CD4-positive, alpha-beta memory T cell (primary cell): ENCODE measurements at regions of chr5 and their contacts with region 1.

Region 1: DNA sequence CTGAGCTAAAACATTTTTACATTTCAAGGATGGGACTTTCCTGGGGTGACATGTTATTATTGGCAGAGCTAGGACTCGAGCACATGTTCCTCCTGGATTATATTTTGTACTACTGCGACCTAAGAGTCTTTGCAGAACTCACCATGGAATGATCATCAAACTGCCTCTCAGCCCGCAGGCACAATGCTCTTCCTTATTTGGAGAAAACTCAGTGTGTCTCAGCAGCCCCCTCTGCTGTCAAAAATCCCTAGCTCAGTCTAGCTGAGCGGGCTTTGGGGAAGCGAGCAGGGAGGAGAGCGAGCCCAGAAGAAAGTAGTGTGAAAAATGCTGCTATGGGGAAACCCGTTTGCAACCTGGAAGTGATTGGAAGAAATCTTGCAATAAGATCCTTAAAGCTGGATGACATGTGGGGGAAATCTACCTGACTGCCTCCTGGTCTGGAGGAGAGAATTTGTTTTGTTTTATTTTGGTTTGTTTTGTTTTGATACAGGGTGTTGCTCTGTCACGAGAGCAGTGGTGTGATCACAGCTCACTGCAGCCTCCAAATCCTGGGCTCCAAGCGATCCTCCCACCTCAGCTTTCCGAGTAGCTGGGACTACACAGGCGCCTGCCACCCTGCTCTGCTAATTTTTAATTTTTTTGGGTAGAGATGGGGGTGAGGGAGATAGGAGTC is 89.9 kb upstream of the CLINT1 start:
- DNase-seq: peak; percentile 63 to 75 (median 68)
- H3K4me3 ChIP-seq: no peak overlapping the region
- H3K4me3 Mint-ChIP-seq: peak overlapping the region in 3 of 8 donors; percentile 1 to 11 (median 5)
- H3K27ac ChIP-seq: no peak overlapping the region
- H3K27ac Mint-ChIP-seq: no peak overlapping the region
- H3K4me1 ChIP-seq: no peaks in the 10 kb centered on the region
- H3K4me1 Mint-ChIP-seq: peaks cover 4 to 6% (median 5%) of the 10 kb centered on the region in 4 donors
- H3K27me3 ChIP-seq: no peaks in the 10 kb centered on the region
- H3K27me3 Mint-ChIP-seq: peaks cover 10 to 12% of the 10 kb centered on the region in 2 donors

Region 2: DNA sequence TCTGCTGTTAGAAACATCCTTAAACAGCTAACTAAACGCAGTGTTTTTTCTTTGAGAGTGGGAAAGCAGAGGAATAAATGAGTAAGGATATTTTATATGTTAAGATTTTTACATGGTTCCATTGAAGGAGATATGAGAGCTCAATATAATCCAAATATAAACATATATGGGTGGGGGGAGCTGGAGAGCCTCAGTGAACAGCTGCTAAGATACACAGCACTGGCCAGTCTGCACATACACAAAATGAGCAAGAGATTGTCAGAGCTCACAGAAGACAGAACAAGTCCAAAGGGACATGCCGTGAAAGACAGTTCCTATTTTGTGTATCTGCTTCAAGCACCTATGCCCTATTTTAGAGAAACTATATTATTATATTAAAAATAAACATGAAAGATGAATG is 136.8 kb before region 1 on chr5:
- CTCF ChIA-PET with region 1: interaction called, 95 read pairs
- POLR2A ChIA-PET with region 1: interaction called, 7 read pairs
- intact Hi-C with region 1: loop called (anchors 1 kb)
- DNase-seq: no peak
- H3K4me3 ChIP-seq: no peak overlapping the region
- H3K4me3 Mint-ChIP-seq: no peak overlapping the region
- H3K27ac ChIP-seq: no peak overlapping the region
- H3K27ac Mint-ChIP-seq: no peak overlapping the region
- H3K4me1 ChIP-seq: no peaks in the 10 kb centered on the region
- H3K4me1 Mint-ChIP-seq: peaks cover 0 to 2% (median 0%) of the 10 kb centered on the region in 4 donors
- H3K27me3 ChIP-seq: no peaks in the 10 kb centered on the region
- H3K27me3 Mint-ChIP-seq: no peaks in the 10 kb centered on the region

Region 3: DNA sequence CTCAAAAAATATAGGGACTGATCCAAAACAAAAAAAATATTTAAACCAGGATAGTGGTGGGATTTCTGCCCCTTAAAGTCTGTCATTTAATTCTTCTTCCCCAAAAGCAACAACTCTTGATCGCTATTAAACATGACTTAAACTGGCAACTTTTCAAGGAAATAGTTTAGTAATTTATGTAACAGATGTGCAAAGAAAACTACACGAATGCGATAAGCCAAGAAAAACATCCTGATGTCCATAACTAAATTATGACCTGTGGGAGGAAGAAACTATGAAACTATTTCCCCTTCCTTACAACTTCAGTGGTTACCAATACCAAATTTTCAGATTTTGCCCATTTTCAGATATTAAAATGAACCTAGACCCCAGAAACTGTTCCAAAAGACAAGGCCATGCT is 121.5 kb before region 1 on chr5:
- CTCF ChIA-PET with region 1: interaction called, 18 read pairs
- POLR2A ChIA-PET with region 1: no interaction called
- intact Hi-C with region 1: no loop called
- DNase-seq: no peak
- H3K4me3 ChIP-seq: no peak overlapping the region
- H3K4me3 Mint-ChIP-seq: no peak overlapping the region
- H3K27ac ChIP-seq: no peak overlapping the region
- H3K27ac Mint-ChIP-seq: peak overlapping the region in 1 of 7 donors; percentile 19
- H3K4me1 ChIP-seq: peaks cover 22% of the 10 kb centered on the region
- H3K4me1 Mint-ChIP-seq: peaks cover 29 to 59% (median 39%) of the 10 kb centered on the region in 4 donors
- H3K27me3 ChIP-seq: no peaks in the 10 kb centered on the region
- H3K27me3 Mint-ChIP-seq: no peaks in the 10 kb centered on the region

Region 4: GRCh38 chr5:157908459-157908858 is 40.4 kb before region 1 on chr5:
- CTCF ChIA-PET with region 1: interaction called, 11 read pairs
- POLR2A ChIA-PET with region 1: no interaction called
- intact Hi-C with region 1: no loop called
- DNase-seq: no peak
- H3K4me3 ChIP-seq: no peak overlapping the region
- H3K4me3 Mint-ChIP-seq: no peak overlapping the region
- H3K27ac ChIP-seq: no peak overlapping the region
- H3K27ac Mint-ChIP-seq: no peak overlapping the region
- H3K4me1 ChIP-seq: no peaks in the 10 kb centered on the region
- H3K4me1 Mint-ChIP-seq: no peaks in the 10 kb centered on the region
- H3K27me3 ChIP-seq: no peaks in the 10 kb centered on the region
- H3K27me3 Mint-ChIP-seq: peaks cover 0 to 1% of the 10 kb centered on the region in 2 donors

Region 5: GRCh38 chr5:157961828-157962590 is 13.1 kb after region 1 on chr5:
- CTCF ChIA-PET with region 1: interaction called, 14 read pairs
- POLR2A ChIA-PET with region 1: no interaction called
- intact Hi-C with region 1: no loop called
- DNase-seq: no peak
- H3K4me3 ChIP-seq: no peak overlapping the region
- H3K4me3 Mint-ChIP-seq: no peak overlapping the region
- H3K27ac ChIP-seq: no peak overlapping the region
- H3K27ac Mint-ChIP-seq: no peak overlapping the region
- H3K4me1 ChIP-seq: no peaks in the 10 kb centered on the region
- H3K4me1 Mint-ChIP-seq: no peaks in the 10 kb centered on the region
- H3K27me3 ChIP-seq: no peaks in the 10 kb centered on the region
- H3K27me3 Mint-ChIP-seq: peaks cover 5 to 7% of the 10 kb centered on the region in 2 donors